AG04450 (cell line): ENCODE measurements at regions of chr7 and their contacts with region 1.

Region 1: GRCh38 chr7:54773472-54774399 is 14.7 kb upstream of the SEC61G start:
- DNase-seq: peak; percentile 57
- H3K4me3 ChIP-seq: peak overlapping the region; percentile 28
- H3K27ac ChIP-seq: no peak overlapping the region
- H3K27me3 ChIP-seq: no peaks in the 10 kb centered on the region
- CTCF ChIP-seq: peak; percentile 92

Region 2: GRCh38 chr7:54758702-54759592 is 14.8 kb before region 1 on chr7 and contains the start of gene SEC61G:
- CTCF ChIA-PET with region 1: interaction called, 53 read pairs
- POLR2A ChIA-PET with region 1: interaction called, 5 read pairs
- DNase-seq: peak; percentile 94
- H3K4me3 ChIP-seq: peak within 1 kb of the TSS; percentile 93
- H3K27ac ChIP-seq: peak within 1 kb of the TSS; percentile 89
- H3K27me3 ChIP-seq: no peaks in the 10 kb centered on the region
- CTCF ChIP-seq: no peak
- polyA plus RNA-seq, gene SEC61G: 250 and 344 TPM in 2 replicates

Region 3: DNA sequence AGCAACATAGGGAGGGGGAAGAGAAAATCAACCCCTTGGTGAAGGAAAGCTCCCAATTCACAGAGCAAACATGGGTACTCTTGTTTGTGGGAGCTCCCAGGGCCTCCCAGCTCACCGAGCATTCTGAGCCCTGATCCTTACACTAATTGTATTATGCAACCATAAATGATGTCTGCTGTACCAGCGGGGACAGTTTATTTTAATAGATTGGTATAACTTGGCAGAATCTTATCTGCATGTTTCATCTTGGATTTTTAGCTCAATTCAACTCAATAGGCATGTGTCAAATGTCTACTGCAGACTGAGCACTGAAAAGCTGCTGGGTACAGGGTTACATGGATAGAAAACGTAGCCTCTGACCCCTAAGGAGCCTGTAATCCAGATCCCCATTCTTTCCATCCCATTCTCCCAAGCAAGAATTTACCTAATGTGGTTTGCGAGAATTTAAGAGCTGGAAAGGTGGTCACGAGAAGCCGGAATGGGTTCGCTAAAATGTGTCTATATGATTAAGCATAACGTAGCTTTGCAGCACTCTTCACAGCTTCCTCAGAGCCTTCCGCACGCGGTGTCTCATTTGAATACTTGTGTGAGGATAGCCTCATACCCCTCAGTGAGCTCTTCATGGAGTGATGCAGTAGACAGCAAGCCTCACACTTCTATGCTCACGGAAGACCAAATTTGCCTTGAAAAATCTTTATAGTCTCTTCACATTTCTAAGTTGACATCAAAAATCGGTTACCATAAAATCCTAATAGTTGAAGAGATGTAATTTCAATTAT is 263.4 kb after region 1 on chr7:
- CTCF ChIA-PET with region 1: interaction called, 11 read pairs
- POLR2A ChIA-PET with region 1: no interaction called
- DNase-seq: no peak
- H3K4me3 ChIP-seq: no peak overlapping the region
- H3K27ac ChIP-seq: no peak overlapping the region
- H3K27me3 ChIP-seq: no peaks in the 10 kb centered on the region
- CTCF ChIP-seq: no peak

Region 4: DNA sequence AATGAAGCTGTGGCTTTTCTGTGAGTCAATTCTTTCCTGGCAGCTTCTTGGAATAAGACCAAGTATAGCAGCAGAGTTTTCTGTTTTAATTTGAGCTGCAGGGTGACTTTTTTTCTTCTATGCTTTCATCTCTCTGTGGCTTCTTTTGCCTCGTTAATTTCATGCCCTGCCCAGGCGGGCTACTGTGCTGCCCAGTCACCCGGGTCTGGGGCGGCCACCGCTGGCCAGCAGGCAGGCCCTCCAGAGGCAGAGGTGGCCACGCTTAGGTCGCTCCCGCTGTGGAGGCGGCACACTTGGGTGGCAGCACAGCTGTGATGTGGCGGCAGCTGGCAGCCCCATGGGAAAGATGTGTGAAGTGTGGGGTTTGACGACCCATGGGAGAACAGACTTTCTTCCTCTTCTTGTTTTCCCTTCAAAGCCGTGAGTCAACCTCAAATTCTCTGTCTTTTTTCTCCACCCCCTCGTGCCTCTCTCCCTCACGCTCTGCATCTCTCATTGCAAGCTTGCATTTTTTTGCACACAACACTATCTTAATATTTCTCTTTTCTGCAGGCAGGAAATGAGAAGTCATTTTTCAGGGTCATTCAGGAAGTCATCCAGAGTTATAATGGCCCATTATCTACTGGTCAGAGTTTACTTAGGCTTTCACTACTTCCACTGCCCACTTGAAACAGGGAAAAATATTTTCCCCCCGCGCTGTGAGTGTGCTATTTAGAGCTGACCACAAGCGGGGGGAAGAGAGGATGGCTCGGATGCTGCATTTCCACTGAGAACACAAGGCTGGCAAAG is 312.9 kb after region 1 on chr7:
- CTCF ChIA-PET with region 1: interaction called, 14 read pairs
- POLR2A ChIA-PET with region 1: no interaction called
- DNase-seq: peak; percentile 45
- H3K4me3 ChIP-seq: peak overlapping the region; percentile 52
- H3K27ac ChIP-seq: peak overlapping the region; percentile 97
- H3K27me3 ChIP-seq: no peaks in the 10 kb centered on the region
- CTCF ChIP-seq: no peak

Region 5: GRCh38 chr7:55140221-55140940 is 366.6 kb after region 1 on chr7:
- CTCF ChIA-PET with region 1: interaction called, 14 read pairs
- POLR2A ChIA-PET with region 1: no interaction called
- DNase-seq: peak; percentile 37
- H3K4me3 ChIP-seq: no peak overlapping the region
- H3K27ac ChIP-seq: peak overlapping the region; percentile 12
- H3K27me3 ChIP-seq: no peaks in the 10 kb centered on the region
- CTCF ChIP-seq: no peak

Region 6: DNA sequence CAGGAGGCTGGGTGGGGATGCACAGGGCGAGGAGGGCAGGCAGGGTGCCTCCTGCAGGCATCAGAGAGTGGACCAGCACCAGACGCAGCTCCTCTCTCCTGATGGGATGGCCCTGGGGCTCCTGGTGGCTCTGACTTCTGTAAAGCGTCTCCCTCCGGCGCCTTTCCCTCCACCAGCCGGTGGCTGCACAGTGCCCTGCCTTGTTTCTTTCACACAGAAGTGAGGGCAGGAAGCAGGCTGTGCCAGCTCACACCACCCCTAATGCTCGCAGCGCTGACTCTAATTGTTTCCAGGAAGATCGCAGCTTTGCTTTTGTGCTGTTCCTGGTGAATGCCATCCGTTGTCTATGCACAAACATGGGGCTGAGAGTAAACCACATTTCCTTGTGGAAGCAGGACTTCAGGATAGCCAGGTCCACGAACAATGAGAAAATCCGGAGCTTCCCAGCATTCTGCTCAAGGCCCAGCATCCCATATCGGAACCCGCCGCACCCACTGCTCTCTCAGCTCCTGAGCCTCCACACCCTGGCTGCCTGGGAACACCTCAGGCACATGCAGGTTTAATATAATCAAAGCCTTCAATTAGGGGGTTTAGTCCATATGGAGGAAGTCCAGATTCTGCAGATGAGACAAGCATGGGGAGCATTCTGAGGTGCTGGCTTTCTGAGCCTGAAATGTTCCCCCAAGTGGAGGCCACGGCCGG is 439.3 kb after region 1 on chr7:
- CTCF ChIA-PET with region 1: interaction called, 14 read pairs
- POLR2A ChIA-PET with region 1: no interaction called
- DNase-seq: no peak
- H3K4me3 ChIP-seq: no peak overlapping the region
- H3K27ac ChIP-seq: no peak overlapping the region
- H3K27me3 ChIP-seq: no peaks in the 10 kb centered on the region
- CTCF ChIP-seq: no peak

Region 7: GRCh38 chr7:55271069-55271626 is 497.4 kb after region 1 on chr7:
- CTCF ChIA-PET with region 1: interaction called, 177 read pairs
- POLR2A ChIA-PET with region 1: no interaction called
- DNase-seq: no peak
- H3K4me3 ChIP-seq: no peak overlapping the region
- H3K27ac ChIP-seq: no peak overlapping the region
- H3K27me3 ChIP-seq: peaks cover 46% of the 10 kb centered on the region
- CTCF ChIP-seq: peak; percentile 67